Activated T-helper 2 cell treated with anti-CD3 and anti-CD28 coated beads, Interferon-gamma antibody, Interleukin-2, Interleukin-4, amounts not matched to agents 10 μg/mL and 5 μg/mL and 100 μg/mL, durations not matched to agents 14 hours and 24 hours and 36 hours (primary cell): ENCODE measurements at regions of chr6 and their contacts with region 1.

Region 1: GRCh38 chr6:106275692-106276091 is 49.9 kb downstream of the ATG5 start:
- DNase-seq: no peak
- H3K4me3 Mint-ChIP-seq: no peak overlapping the region
- H3K27ac Mint-ChIP-seq: peak overlapping the region; percentile 12
- H3K4me1 Mint-ChIP-seq: peaks cover 27% of the 10 kb centered on the region
- H3K27me3 Mint-ChIP-seq: no peaks in the 10 kb centered on the region

Region 2: DNA sequence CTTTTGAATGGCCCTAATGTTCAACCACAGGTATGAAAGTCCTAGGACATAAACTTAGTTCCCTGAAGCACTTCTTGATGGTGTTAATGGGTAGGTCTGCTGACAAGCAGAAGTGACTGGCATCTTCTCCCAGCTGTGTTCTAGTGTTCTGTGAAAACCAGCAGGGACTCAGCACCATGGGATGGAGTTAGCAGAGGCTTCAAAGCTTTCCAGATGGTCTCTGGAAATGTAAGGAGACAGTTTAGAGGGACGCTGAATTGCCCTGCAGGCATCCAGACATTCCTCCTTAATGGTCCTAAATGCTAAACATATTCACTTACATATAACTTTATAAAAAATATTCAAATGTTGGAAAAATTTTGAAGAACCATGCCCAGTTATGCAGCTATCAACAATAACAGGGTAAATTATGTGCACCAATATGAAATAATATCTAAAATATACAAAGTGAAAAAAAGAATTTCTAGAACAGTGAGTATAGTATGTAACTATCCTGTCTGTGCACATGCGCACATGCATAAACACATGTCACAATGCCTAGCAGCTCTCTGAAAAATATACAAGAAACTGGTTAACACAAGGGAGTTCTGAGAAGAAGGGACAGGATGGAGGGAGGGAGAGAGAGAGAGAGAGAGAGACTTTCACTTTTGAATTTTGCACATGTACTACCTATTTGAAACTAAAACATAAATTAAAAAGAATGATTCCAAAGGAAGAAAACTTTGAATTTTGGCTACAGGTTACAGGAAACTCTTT is 102.4 kb before region 1 on chr6:
- intact Hi-C with region 1: no loop called
- DNase-seq: no peak
- H3K4me3 Mint-ChIP-seq: no peak overlapping the region
- H3K27ac Mint-ChIP-seq: peak overlapping the region; percentile 29
- H3K4me1 Mint-ChIP-seq: peaks cover 48% of the 10 kb centered on the region
- H3K27me3 Mint-ChIP-seq: no peaks in the 10 kb centered on the region

Region 3: DNA sequence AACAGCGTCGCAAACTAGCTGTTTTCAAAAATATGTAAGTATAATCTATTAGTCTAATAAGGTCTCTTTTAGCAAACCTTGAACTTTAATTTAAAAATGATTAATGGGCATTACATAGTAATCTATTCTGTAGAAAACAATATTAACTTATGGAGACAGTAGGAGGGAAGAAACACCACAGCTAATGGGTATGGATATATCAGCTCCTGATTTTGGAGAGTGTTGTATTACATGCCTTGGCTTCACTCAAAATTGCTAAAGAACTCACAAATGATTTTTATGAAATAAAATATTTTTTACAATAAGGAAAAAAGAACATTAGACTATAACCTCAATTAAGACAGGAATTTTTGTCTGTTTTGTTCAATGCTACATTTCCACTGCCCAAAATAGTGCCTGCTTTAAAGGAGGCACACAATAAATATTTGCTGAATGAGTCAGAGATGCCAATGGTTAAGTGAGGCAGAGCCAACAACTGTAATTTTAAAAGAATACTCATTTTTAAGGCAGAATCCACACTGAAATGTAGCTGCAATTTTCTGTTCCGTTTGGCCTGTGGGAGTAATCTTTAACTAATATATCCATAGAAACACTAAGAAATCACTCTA is 34.2 kb after region 1 on chr6:
- intact Hi-C with region 1: loop called (anchors 5 kb)
- DNase-seq: no peak
- H3K4me3 Mint-ChIP-seq: no peak overlapping the region
- H3K27ac Mint-ChIP-seq: no peak overlapping the region
- H3K4me1 Mint-ChIP-seq: peaks cover 37% of the 10 kb centered on the region
- H3K27me3 Mint-ChIP-seq: no peaks in the 10 kb centered on the region

Region 4: DNA sequence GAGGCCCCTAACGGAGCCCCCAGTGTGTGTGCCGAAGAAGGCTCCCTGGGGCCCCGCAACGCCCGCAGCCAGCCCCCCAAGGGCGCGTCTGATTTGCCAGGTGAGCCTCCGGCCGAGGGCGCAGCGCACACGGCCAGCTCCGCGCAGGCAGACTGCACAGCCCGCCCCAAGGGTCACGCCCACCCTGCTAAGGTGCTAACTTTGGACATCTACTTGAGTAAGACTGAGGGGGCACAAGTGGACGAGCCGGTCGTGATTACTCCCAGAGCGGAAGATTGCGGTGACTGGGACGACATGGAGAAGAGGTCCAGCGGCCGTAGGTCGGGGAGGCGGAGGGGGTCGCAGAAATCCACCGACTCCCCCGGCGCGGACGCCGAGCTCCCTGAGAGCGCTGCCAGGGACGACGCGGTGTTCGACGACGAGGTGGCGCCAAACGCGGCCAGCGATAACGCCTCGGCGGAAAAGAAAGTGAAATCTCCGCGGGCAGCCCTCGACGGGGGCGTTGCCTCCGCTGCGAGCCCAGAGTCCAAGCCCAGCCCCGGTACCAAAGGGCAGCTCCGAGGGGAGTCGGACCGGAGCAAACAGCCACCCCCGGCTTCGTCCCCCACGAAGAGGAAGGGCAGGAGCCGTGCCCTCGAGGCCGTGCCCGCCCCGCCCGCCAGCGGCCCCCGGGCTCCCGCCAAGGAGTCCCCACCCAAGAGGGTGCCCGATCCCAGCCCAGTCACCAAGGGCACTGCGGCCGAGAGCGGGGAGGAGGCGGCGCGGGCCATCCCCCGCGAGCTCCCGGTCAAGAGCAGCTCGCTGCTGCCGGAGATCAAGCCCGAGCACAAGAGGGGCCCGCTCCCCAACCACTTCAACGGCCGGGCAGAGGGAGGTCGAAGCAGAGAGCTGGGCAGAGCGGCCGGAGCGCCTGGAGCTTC is 236.6 kb after region 1 on chr6:
- intact Hi-C with region 1: no loop called
- DNase-seq: peak; percentile 80
- H3K4me3 Mint-ChIP-seq: peak overlapping the region; percentile 87
- H3K27ac Mint-ChIP-seq: peak overlapping the region; percentile 88
- H3K4me1 Mint-ChIP-seq: peaks cover 59% of the 10 kb centered on the region
- H3K27me3 Mint-ChIP-seq: peaks cover 12% of the 10 kb centered on the region